Upper lobe of right lung (tissue), 1 donor: ENCODE measurements at regions of chr4 and their contacts with region 1.

Region 1: DNA sequence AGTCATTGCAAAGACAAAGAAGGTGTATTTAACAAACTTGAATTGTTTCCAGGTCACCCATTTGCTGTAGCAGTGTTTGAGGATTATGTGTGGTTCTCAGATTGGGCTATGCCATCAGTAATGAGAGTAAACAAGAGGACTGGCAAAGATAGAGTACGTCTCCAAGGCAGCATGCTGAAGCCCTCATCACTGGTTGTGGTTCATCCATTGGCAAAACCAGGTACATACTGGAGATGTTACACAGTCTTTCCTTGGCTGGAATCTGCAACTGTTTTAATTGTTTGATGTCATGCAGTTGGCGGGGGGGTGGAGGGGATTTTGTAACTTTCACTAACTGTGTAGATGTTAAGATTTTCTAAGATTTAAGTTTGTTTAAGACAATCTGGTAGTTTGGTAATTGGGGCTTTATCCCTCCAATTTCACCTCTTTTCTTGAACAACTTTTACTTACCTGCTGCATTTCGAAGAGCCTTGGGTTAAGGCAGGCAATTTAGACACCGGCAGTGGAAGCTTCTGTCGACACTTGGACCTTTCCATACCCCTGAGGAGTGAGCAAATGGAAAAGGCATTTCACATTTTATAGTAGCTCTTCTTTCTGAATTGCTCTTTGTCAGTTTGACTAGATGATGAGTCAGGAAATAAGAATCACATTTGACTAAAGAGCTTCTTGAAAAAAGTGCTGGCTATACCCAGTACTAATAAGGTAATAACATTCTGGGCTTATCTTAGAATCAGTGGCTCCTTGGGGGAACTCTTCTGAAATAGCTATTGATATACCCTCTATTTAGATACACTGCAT is 67.4 kb downstream of the EGF start:
- DNase-seq: no peak
- ATAC-seq: no peak
- H3K4me3 ChIP-seq: no peak overlapping the region
- H3K27ac ChIP-seq: no peak overlapping the region
- H3K4me1 ChIP-seq: no peaks in the 10 kb centered on the region
- H3K27me3 ChIP-seq: no peaks in the 10 kb centered on the region
- CTCF ChIP-seq: no peak

Region 2: GRCh38 chr4:109134268-109134667 is 845.9 kb before region 1 on chr4:
- intact Hi-C with region 1: no loop called
- DNase-seq: no peak
- ATAC-seq: no peak
- H3K4me3 ChIP-seq: no peak overlapping the region
- H3K27ac ChIP-seq: no peak overlapping the region
- H3K4me1 ChIP-seq: no peaks in the 10 kb centered on the region
- H3K27me3 ChIP-seq: no peaks in the 10 kb centered on the region
- CTCF ChIP-seq: no peak

Region 3: DNA sequence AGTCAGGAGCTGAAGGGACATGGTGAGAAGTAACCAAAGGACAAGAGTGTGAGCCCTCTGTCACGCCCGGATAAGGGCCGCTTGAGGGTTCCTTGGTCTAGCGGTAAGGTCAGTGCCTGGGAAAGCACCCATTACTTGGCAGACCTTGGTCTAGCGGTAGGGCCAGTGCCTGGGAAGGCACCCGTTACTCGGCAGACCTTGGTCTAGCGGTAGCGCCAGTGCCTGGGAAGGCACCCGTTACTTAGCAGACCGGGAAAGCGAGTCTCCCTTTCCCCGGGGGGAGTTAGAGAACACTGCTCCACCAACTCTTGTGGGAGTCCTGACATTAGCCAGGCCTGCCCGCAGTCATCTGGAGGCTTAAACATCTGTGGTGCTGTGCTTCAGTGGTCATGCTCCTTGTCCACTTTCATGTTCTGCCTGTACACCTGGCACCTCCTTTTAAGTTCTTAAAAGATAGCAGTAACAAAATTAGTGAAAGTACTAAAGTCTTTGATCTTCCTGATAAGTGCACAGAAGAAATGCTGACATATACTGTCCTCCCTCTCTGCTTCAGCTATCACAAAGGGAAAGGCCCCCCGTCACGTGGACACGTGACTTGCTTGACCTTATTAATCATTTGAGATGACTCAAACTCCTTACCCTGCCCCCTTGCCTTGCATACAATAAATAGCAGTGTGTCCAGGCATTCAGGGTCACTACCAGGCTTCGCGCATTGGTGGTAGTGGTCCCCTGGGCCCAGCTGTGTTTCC is 555.9 kb before region 1 on chr4:
- intact Hi-C with region 1: loop called (anchors 10 kb)
- DNase-seq: no peak
- ATAC-seq: no peak
- H3K4me3 ChIP-seq: no peak overlapping the region
- H3K27ac ChIP-seq: no peak overlapping the region
- H3K4me1 ChIP-seq: no peaks in the 10 kb centered on the region
- H3K27me3 ChIP-seq: no peaks in the 10 kb centered on the region
- CTCF ChIP-seq: no peak